Right ventricle myocardium inferior (tissue), 1 donor: ENCODE measurements at regions of chr5 and their contacts with region 1.

Region 1: GRCh38 chr5:146426853-146427618 is 20.1 kb upstream of the TCERG1 start:
- DNase-seq: no peak
- ATAC-seq: peak; percentile 16

Region 2: GRCh38 chr5:146185161-146185560 is 241.9 kb before region 1 on chr5:
- intact Hi-C with region 1: loop called (anchors 1 kb)
- DNase-seq: no peak
- ATAC-seq: no peak

Region 3: DNA sequence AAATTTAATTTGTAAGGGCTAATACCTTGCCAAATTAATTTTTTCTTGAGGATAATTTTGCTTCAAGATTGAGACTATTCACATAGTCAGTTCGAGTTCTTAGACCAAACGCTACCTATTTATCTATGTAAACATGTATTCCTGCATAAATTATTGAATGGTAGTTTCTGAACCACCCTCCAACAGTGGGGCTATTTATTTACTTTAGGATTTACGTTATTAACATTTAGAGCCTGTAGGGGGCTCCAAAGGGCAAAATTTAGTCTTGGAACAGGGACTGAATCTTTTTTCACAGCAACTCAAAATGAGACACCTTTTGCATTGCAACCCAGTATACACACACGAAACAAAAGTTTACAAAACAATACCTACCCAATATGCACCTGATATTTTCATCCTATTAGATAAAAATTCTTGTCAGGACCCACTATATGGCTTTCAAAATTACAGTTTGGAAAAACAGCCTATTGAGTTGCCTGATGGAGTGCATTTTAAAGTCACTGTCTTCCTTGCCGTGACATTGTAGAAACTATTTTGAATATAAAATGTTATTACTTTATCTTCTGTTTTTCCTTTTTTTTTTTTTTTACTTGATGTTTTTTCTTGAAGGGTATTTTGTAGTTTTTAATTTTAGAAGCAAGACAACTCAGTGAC is 135.5 kb before region 1 on chr5:
- intact Hi-C with region 1: loop called (anchors 1 kb)
- DNase-seq: no peak
- ATAC-seq: no peak

Region 4: GRCh38 chr5:146529984-146530383 is 102.9 kb after region 1 on chr5:
- intact Hi-C with region 1: no loop called
- DNase-seq: no peak
- ATAC-seq: no peak